ENCODE measurements at regions of chr6 and their contacts with region 1.

Region 1: GRCh38 chr6:20693466-20694063 is 159.3 kb downstream of the CDKAL1 start:
- DNase-seq: no peak
- ATAC-seq: peak; percentile 9 to 34 (median 33)
- H3K4me3 ChIP-seq: no peak overlapping the region
- H3K4me3 Mint-ChIP-seq: peak overlapping the region; percentile 73
- H3K27ac ChIP-seq: no peak overlapping the region
- H3K27ac Mint-ChIP-seq: peak overlapping the region; percentile 69 to 72
- H3K4me1 ChIP-seq: peaks cover 6% of the 10 kb centered on the region
- H3K4me1 Mint-ChIP-seq: peaks cover 47 to 57% of the 10 kb centered on the region in 2 donors
- H3K27me3 ChIP-seq: no peaks in the 10 kb centered on the region
- H3K27me3 Mint-ChIP-seq: no peaks in the 10 kb centered on the region
- CTCF ChIP-seq: no peak

Region 2: GRCh38 chr6:20212392-20213217 is 481.0 kb before region 1 on chr6 and contains the start of gene MBOAT1:
- intact Hi-C with region 1: loop called (anchors 5 kb)
- DNase-seq: peak; percentile 29 to 81
- ATAC-seq: peak; percentile 62 to 75 (median 65)
- H3K4me3 ChIP-seq: peak within 1 kb of the TSS; percentile 67
- H3K4me3 Mint-ChIP-seq: peak within 1 kb of the TSS; percentile 95
- H3K27ac ChIP-seq: peak within 1 kb of the TSS; percentile 71
- H3K27ac Mint-ChIP-seq: peak within 1 kb of the TSS; percentile 65 to 83
- H3K4me1 ChIP-seq: peaks cover 21% of the 10 kb centered on the region
- H3K4me1 Mint-ChIP-seq: peaks cover 20 to 25% of the 10 kb centered on the region in 2 donors
- H3K27me3 ChIP-seq: no peaks in the 10 kb centered on the region
- H3K27me3 Mint-ChIP-seq: peaks cover 17 to 20% of the 10 kb centered on the region in 2 donors
- CTCF ChIP-seq: no peak
- total RNA-seq, gene MBOAT1: 3.6 to 7.5 (median 5.2) TPM

Region 3: DNA sequence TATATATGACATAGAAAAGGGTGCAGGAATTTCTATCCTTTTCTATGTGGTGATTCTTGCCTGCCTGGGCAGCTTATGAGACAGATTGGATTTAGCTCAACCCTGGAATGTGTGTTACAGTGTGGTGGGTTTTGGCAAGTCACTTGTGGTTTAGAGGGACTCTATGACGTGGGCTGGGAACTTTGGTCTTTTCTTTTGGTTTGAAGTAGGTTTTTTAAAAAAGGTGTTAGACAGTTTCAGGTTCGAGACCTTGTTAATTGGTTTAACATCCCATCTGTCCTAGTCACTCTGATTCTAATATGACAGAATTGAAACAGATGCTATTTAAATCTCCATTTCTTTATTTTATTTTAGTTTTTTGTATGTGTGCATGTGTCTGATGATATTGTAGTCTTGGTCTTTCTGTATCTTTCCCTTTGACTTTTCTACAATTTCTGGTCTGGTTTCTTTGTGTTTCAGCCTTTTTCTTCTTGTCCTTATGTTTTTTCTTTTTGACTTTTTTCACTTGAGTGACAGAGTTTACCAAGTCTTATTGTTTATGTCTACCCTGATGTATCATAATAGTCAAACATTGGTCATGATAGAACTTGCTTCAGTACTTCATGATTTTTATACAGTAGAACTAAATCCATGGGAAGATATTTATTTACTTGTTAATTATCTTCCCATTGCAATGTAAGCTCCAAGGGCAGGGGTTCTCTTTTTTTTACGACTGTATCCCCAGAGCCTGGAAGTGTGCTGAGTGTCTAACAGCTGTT is 15.0 kb after region 1 on chr6:
- intact Hi-C with region 1: loop called (anchors 1 kb)
- DNase-seq: peak in 1 of 2 donors; percentile 61
- ATAC-seq: peak; percentile 77 to 90 (median 83)
- H3K4me3 ChIP-seq: no peak overlapping the region
- H3K4me3 Mint-ChIP-seq: no peak overlapping the region
- H3K27ac ChIP-seq: no peak overlapping the region
- H3K27ac Mint-ChIP-seq: peak overlapping the region; percentile 10 to 67
- H3K4me1 ChIP-seq: no peaks in the 10 kb centered on the region
- H3K4me1 Mint-ChIP-seq: peaks cover 26 to 49% of the 10 kb centered on the region in 2 donors
- H3K27me3 ChIP-seq: no peaks in the 10 kb centered on the region
- H3K27me3 Mint-ChIP-seq: no peaks in the 10 kb centered on the region
- CTCF ChIP-seq: no peak

Region 4: DNA sequence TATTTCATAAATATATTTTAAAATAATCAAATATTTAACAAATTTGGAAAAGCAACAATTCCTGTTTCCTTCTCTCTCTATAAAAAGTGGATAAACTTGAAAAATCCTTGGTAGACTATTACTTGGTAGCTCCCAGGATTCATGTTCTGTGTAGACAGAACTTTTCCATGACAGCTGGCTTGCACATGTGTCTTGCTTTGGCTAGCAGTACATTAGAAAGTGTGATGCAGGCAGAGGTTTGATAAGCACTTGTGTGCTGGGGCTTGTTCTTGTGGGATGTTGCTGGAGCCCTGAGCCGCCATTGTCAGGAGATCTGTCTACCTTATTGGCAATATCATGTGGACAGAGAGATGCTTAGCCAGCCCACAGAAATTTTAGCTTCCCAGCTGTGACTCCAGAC is 167.9 kb after region 1 on chr6:
- intact Hi-C with region 1: no loop called
- DNase-seq: no peak
- ATAC-seq: no peak
- H3K4me3 ChIP-seq: no peak overlapping the region
- H3K4me3 Mint-ChIP-seq: no peak overlapping the region
- H3K27ac ChIP-seq: no peak overlapping the region
- H3K27ac Mint-ChIP-seq: no peak overlapping the region
- H3K4me1 ChIP-seq: no peaks in the 10 kb centered on the region
- H3K4me1 Mint-ChIP-seq: no peaks in the 10 kb centered on the region
- H3K27me3 ChIP-seq: no peaks in the 10 kb centered on the region
- H3K27me3 Mint-ChIP-seq: no peaks in the 10 kb centered on the region
- CTCF ChIP-seq: no peak